ENCODE measurements at regions of chr2 and their contacts with region 1.

Region 1: DNA sequence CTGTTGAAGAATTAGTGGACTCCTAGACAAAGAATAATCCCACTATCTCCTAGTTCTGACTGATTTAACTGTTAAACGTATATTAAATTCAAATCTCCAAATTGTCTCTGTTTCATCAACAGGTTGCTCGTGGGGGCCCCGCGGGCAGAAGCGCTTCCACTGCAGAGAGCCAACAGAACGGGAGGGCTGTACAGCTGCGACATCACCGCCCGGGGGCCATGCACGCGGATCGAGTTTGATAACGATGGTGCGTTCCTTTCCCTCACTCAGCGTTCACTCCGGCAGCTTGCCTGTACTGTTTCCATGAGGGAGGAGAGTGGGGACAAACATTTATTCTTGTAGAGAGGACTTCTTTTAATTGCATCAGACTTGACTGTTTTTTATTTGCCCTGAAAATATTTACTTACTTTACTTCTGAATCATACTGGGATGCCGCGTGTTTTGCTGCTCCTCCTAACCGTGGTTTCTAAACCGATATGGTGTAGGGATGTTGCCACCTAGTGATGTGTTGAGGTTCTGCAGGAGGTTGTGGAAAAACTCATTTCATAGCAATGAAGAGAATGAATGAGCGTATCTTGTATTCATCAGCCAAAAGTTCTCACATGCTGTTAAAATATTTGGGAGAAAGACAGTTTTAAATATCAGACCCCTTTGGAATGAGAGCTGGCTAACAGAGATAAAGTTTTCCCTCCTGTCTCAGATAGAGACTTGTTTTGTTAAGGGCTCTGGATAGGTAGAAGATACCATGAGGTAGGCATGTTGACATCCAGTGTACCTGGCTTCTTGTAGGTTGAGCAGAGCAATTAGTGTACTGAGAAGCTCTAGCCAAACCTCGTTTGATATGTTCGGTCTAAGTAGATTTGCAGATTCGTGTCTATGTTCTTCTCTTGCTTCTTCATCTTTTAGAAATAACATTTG is 38.3 kb downstream of the ITGA6 start:
- DNase-seq: peak; percentile 78
- ATAC-seq: peak; percentile 51

Region 2: GRCh38 chr2:172172513-172173173 is 293.0 kb before region 1 on chr2:
- intact Hi-C with region 1: loop called (anchors 5 to 10 kb)
- DNase-seq: peak; percentile 67 to 89
- ATAC-seq: peak; percentile 96

Region 3: GRCh38 chr2:172179045-172179701 is 286.5 kb before region 1 on chr2:
- intact Hi-C with region 1: loop called (anchors 5 to 10 kb)
- DNase-seq: peak; percentile 55 to 73
- ATAC-seq: peak; percentile 86

Region 4: GRCh38 chr2:172427256-172427989 is 38.3 kb before region 1 on chr2 and contains the start of gene ITGA6:
- intact Hi-C with region 1: loop called in 1 of 2 experiments (anchors 5 kb)
- DNase-seq: peak; percentile 87 to 89
- ATAC-seq: peak; percentile 69
- total RNA-seq, gene ITGA6: 159 to 218 TPM